MCF 10A (cell line): ENCODE measurements at regions of chr3 and their contacts with region 1.

Region 1: GRCh38 chr3:134250717-134251220 is at the start of gene RYK:
- DNase-seq: peak; percentile 69
- H3K4me3 Mint-ChIP-seq: peak within 1 kb of the TSS; percentile 79
- H3K27ac Mint-ChIP-seq: peak within 1 kb of the TSS; percentile 84
- H3K4me1 Mint-ChIP-seq: peaks cover 7% of the 10 kb centered on the region
- H3K27me3 Mint-ChIP-seq: no peaks in the 10 kb centered on the region
- CTCF ChIP-seq: no peak
- total RNA-seq, gene RYK: 76.1 and 79.8 TPM in 2 replicates

Region 2: DNA sequence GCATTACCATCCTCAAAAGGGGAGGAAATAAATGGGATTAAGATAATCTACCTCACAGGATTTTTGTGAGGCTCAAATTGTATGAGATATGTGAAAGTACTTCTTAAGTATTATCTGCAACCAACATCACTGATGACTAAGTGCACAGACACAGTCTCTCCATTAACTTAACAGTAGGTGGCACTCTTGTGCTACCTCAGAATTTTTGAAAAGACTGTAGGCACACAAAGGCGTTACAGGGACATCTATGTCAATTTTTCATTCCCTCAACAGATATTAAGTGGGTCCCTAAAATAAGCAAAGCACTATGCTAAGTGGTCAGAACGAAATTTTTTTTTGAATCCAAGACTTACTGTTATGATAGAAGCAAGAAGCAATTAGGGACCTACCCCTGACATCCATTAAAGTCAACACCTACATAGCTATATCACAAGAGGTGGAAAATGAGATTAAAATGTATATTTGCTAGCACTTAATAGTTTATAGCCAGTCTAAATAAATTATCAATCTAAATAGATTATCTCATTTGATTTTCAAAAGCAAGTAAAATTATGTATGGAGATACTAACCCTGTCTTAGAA is 53.0 kb before region 1 on chr3:
- CTCF ChIA-PET with region 1: interaction called, 6 read pairs
- POLR2A ChIA-PET with region 1: interaction called, 21 read pairs
- intact Hi-C with region 1: no loop called
- DNase-seq: peak; percentile 76
- H3K4me3 Mint-ChIP-seq: no peak overlapping the region
- H3K27ac Mint-ChIP-seq: peak overlapping the region; percentile 20
- H3K4me1 Mint-ChIP-seq: peaks cover 29% of the 10 kb centered on the region
- H3K27me3 Mint-ChIP-seq: no peaks in the 10 kb centered on the region
- CTCF ChIP-seq: peak; percentile 83

Region 3: GRCh38 chr3:134222835-134223234 is 27.9 kb before region 1 on chr3:
- CTCF ChIA-PET with region 1: interaction called, 113 read pairs
- POLR2A ChIA-PET with region 1: interaction called, 32 read pairs
- intact Hi-C with region 1: no loop called
- DNase-seq: no peak
- H3K4me3 Mint-ChIP-seq: no peak overlapping the region
- H3K27ac Mint-ChIP-seq: no peak overlapping the region
- H3K4me1 Mint-ChIP-seq: peaks cover 14% of the 10 kb centered on the region
- H3K27me3 Mint-ChIP-seq: no peaks in the 10 kb centered on the region
- CTCF ChIP-seq: no peak

Region 4: DNA sequence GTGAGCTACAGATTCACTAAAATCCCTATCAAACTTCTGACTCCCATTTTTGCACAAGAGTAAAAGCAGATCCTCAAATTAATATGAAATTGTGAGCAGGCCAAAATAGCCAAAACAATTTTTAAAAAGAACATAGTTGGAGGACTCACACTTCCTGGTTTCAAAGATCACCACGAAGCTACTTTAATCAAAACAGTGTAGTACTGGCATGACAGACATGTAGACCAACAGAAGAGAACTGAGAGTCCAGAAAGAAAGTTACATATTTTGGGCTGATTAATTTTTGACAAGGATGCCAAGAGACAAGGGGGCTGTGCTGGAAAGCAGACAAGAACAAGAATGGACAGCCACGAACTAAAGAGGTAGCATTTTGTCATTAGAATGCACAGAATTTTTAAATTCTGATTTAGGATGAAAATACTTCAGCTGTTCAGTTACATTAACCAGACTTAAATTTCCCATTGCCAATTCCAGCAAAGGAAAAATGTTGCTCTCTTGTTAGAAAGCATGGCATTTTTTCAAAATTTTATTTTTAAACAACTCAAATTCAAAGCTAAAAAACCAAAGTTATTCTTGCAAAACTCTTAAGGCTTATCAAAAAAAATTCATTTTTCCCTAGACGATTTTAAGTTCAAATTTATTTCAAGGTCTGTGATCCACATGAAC is 14.1 kb before region 1 on chr3:
- CTCF ChIA-PET with region 1: interaction called, 4 read pairs
- POLR2A ChIA-PET with region 1: interaction called, 18 read pairs
- intact Hi-C with region 1: no loop called
- DNase-seq: no peak
- H3K4me3 Mint-ChIP-seq: no peak overlapping the region
- H3K27ac Mint-ChIP-seq: peak overlapping the region; percentile 86
- H3K4me1 Mint-ChIP-seq: peaks cover 69% of the 10 kb centered on the region
- H3K27me3 Mint-ChIP-seq: no peaks in the 10 kb centered on the region
- CTCF ChIP-seq: no peak

Region 5: GRCh38 chr3:134485718-134486576 is 235.2 kb after region 1 on chr3 and contains the starts of genes ANAPC13 and CEP63:
- CTCF ChIA-PET with region 1: no interaction called
- POLR2A ChIA-PET with region 1: interaction called, 16 read pairs
- intact Hi-C with region 1: no loop called
- DNase-seq: peak; percentile 98
- H3K4me3 Mint-ChIP-seq: peak within 1 kb of the TSS; percentile 75
- H3K27ac Mint-ChIP-seq: peak within 1 kb of the TSS; percentile 87
- H3K4me1 Mint-ChIP-seq: peaks cover 31% of the 10 kb centered on the region
- H3K27me3 Mint-ChIP-seq: no peaks in the 10 kb centered on the region
- CTCF ChIP-seq: no peak
- total RNA-seq, gene ANAPC13: 61.5 and 78.4 TPM in 2 replicates
- total RNA-seq, gene CEP63: 37.0 and 40.0 TPM in 2 replicates